ENCODE measurements at regions of chr6 and their contacts with region 1.

Region 1: GRCh38 chr6:26473758-26474438 is 16.1 kb downstream of the BTN2A1 start:
- DNase-seq: peak; percentile 86
- H3K4me3 Mint-ChIP-seq: peak overlapping the region; percentile 99
- H3K27ac Mint-ChIP-seq: peak overlapping the region; percentile 100
- H3K4me1 Mint-ChIP-seq: peaks cover 36% of the 10 kb centered on the region
- H3K27me3 Mint-ChIP-seq: no peaks in the 10 kb centered on the region

Region 2: DNA sequence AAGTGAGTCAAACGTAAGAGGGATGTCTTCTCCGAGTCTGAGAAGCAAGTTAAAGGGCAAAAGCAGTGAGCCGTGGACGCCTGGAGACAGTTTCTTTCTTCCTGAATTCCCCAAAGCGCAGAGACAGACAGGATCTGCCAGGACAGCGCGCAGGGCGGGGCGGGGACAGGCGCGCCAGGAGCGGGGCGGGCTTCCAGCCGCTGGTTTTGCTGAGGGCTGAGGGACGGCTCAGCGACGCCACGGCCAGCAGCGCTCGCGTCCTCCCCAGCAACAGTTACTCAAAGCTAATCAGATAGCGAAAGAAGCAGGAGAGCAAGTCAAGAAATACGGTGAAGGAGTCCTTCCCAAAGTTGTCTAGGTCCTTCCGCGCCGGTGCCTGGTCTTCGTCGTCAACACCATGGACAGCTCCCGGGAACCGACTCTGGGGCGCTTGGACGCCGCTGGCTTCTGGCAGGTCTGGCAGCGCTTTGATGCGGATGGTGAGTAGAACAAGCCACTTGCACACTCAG is 821.8 kb before region 1 on chr6 and contains the start of gene SCGN:
- CTCF ChIA-PET with region 1: no interaction called
- POLR2A ChIA-PET with region 1: no interaction called
- DNase-seq: peak; percentile 54
- H3K4me3 Mint-ChIP-seq: no peak within 1 kb of the TSS
- H3K27ac Mint-ChIP-seq: no peak within 1 kb of the TSS
- H3K4me1 Mint-ChIP-seq: no peaks in the 10 kb centered on the region
- H3K27me3 Mint-ChIP-seq: peaks cover 53% of the 10 kb centered on the region
- total RNA-seq, gene SCGN: not detected

Region 3: GRCh38 chr6:26363882-26364701 is 109.8 kb before region 1 on chr6:
- CTCF ChIA-PET with region 1: no interaction called
- POLR2A ChIA-PET with region 1: interaction called, 15 read pairs
- DNase-seq: no peak
- H3K4me3 Mint-ChIP-seq: no peak overlapping the region
- H3K27ac Mint-ChIP-seq: no peak overlapping the region
- H3K4me1 Mint-ChIP-seq: peaks cover 57% of the 10 kb centered on the region
- H3K27me3 Mint-ChIP-seq: no peaks in the 10 kb centered on the region

Region 4: DNA sequence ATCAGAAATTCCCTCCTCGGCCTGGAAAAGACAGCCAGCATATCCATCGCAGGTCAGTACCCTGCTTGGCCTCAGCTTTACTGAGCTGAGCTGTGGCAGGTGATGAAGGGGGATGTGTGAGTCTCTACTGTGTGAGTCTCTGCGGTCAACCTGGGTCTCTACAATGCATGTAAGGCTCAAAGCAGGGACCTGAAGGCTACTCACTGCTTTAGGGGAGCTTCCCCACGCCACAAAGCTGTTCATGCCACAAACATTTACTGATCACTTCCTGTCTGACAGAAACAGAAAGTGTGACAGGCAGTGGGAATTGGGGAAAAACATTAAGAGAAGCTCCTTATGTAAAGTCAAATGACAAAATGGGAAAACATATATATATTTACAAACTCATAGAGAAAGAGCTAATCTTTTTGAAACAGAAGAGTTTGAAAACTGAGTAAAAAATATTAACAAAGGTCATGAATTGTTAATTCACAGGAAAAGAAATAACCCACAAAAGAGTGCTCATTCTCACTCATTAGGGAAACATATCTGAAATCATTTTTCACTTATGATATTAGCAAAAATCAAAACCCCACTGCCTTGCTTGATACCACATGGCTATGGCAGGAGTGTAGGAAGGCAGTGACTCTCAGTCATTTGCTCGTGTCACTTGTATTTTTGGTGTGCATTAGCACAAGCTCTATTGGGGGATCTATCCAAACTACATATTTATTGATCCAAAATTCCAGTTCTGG is 27.8 kb before region 1 on chr6:
- CTCF ChIA-PET with region 1: interaction called, 3 read pairs
- POLR2A ChIA-PET with region 1: interaction called, 20 read pairs
- DNase-seq: peak; percentile 49
- H3K4me3 Mint-ChIP-seq: no peak overlapping the region
- H3K27ac Mint-ChIP-seq: peak overlapping the region; percentile 17
- H3K4me1 Mint-ChIP-seq: peaks cover 46% of the 10 kb centered on the region
- H3K27me3 Mint-ChIP-seq: no peaks in the 10 kb centered on the region

Region 5: DNA sequence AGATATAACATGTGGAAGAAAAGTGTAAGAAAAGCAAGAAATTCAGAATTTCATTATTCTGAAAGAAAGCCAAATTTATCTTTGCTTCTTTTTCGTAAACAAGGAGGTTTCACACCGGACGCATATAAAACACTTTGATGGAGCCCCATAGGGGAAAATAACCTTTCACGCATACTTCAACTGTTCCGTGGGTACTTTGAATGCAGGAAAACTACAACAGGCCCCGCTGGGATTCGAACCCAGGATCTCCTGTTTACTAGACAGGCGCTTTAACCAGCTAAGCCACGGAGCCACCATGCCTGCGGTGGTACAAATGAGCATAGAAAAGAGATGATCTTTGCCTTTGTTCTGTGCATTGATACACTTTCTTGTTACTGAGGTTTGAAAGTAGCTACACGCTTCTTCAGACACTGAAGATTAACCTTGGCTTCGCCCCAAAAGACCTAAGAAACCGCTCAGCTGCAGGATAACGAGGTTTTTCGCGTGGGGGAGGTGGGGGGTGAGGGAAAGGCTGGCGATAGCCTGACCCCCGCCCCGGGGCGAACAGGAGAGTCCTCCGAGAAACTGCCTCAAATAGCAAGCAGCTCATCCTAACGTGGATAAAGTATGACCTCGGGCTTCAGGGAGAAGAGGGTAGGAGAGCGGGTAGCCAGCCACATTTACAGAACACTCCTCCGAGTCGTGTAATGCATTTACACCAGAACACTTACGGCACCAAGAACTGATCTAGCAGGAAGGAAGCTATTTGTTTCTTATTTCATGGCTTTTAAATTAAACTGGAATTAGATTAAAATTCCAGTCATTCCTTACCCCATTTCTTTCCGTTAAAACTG is 59.0 kb after region 1 on chr6:
- CTCF ChIA-PET with region 1: interaction called, 7 read pairs
- POLR2A ChIA-PET with region 1: interaction called, 52 read pairs
- DNase-seq: peak; percentile 93
- H3K4me3 Mint-ChIP-seq: peak overlapping the region; percentile 89
- H3K27ac Mint-ChIP-seq: peak overlapping the region; percentile 87
- H3K4me1 Mint-ChIP-seq: peaks cover 42% of the 10 kb centered on the region
- H3K27me3 Mint-ChIP-seq: no peaks in the 10 kb centered on the region

Measured in activated CD4-positive, alpha-beta memory T cell treated with anti-CD3 and anti-CD28 coated beads, Interleukin-2, amount 10 ng/mL, durations not matched to agents 7 days and 5 days (primary cell).